ENCODE measurements at regions of chr12 and their contacts with region 1.

Region 1: DNA sequence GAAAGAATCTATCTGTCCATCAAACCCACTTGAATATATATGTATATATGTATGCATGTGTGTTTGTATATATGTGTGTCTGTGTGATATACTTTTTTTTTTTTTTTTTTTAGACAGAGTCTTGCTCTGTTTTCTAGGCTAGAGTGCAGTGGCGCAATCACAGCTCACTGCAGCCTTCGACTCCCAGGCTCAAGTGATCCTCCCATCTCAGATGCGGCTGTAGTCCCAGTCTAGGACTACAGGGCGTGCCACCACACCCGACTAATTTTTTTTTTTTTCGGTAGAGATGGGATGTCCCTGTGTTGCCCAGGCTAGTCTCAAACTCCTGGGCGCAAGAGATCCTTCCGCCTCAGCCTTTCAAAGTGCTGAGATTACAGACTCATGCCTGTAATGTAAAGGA is 13.0 kb upstream of the APOBEC1 start:
- DNase-seq: no peak
- H3K4me3 ChIP-seq: no peak overlapping the region
- H3K27me3 ChIP-seq: no peaks in the 10 kb centered on the region
- CTCF ChIP-seq: no peak

Region 2: DNA sequence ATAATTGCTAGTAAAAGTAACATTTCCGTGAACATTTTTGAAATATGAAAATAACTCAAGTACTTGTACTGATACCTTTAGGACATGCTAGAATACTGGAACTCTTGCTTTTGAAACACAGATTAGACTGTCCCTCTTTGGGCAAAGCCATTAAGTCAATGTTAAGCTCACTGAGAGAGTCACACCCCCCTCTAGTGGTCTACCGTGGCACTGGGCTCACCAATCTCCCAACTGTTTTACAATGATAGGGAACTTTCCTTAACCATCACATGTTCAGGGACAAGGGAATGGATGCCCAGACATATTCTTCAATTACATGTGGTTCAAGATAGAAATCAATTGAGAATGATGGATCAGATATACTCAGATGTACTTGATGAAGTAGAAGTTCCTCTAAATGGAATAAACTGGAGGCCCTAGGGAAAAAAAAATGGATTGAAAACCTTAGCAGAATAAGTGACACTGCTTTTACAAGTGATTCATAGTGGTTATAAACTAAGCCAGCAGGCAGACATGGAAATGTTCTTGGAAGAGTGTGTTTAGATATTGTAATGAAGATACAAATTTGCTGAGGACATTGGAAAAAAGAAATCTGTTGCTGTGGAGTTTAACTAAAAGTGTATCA is 128.2 kb after region 1 on chr12:
- CTCF ChIA-PET with region 1: interaction called, 32 read pairs
- POLR2A ChIA-PET with region 1: no interaction called
- DNase-seq: peak; percentile 15
- H3K4me3 ChIP-seq: no peak overlapping the region
- H3K27me3 ChIP-seq: no peaks in the 10 kb centered on the region
- CTCF ChIP-seq: peak; percentile 89

Measured in BJ (cell line).